Mammary epithelial cell (primary cell): ENCODE measurements at regions of chr6 and their contacts with region 1.

Region 1: GRCh38 chr6:16128759-16129622 is at the start of gene MYLIP:
- DNase-seq: peak; percentile 87
- H3K4me3 ChIP-seq: peak within 1 kb of the TSS; percentile 56 to 81 (median 71)
- H3K27ac ChIP-seq: no peak within 1 kb of the TSS
- H3K4me1 ChIP-seq: peaks cover 17% of the 10 kb centered on the region
- H3K27me3 ChIP-seq: no peaks in the 10 kb centered on the region
- CTCF ChIP-seq: peak; percentile 19 to 59
- total RNA-seq, gene MYLIP: 3.7 to 5.0 TPM

Region 2: GRCh38 chr6:15752820-15753219 is 376.2 kb before region 1 on chr6:
- CTCF ChIA-PET with region 1: no interaction called
- dilution Hi-C with region 1: no loop called
- in situ Hi-C with region 1: no loop called
- intact Hi-C with region 1: loop called (anchors 2 kb)
- DNase-seq: no peak
- H3K4me3 ChIP-seq: no peak overlapping the region
- H3K27ac ChIP-seq: no peak overlapping the region
- H3K4me1 ChIP-seq: no peaks in the 10 kb centered on the region
- H3K27me3 ChIP-seq: no peaks in the 10 kb centered on the region
- CTCF ChIP-seq: peak in 1 of 2 donors; percentile 12

Region 3: GRCh38 chr6:15881150-15881549 is 247.8 kb before region 1 on chr6:
- CTCF ChIA-PET with region 1: no interaction called
- dilution Hi-C with region 1: no loop called
- in situ Hi-C with region 1: no loop called
- intact Hi-C with region 1: no loop called
- DNase-seq: no peak
- H3K4me3 ChIP-seq: no peak overlapping the region
- H3K27ac ChIP-seq: no peak overlapping the region
- H3K4me1 ChIP-seq: peaks cover 9% of the 10 kb centered on the region
- H3K27me3 ChIP-seq: no peaks in the 10 kb centered on the region
- CTCF ChIP-seq: no peak

Region 4: GRCh38 chr6:15893556-15894268 is 235.3 kb before region 1 on chr6:
- CTCF ChIA-PET with region 1: interaction called, 5 read pairs
- dilution Hi-C with region 1: no loop called
- in situ Hi-C with region 1: no loop called
- intact Hi-C with region 1: loop called (anchors 5 kb)
- DNase-seq: peak; percentile 35
- H3K4me3 ChIP-seq: no peak overlapping the region
- H3K27ac ChIP-seq: no peak overlapping the region
- H3K4me1 ChIP-seq: no peaks in the 10 kb centered on the region
- H3K27me3 ChIP-seq: no peaks in the 10 kb centered on the region
- CTCF ChIP-seq: peak; percentile 41 to 63

Region 5: GRCh38 chr6:16168858-16169257 is 39.9 kb after region 1 on chr6:
- CTCF ChIA-PET with region 1: no interaction called
- dilution Hi-C with region 1: no loop called
- in situ Hi-C with region 1: no loop called
- intact Hi-C with region 1: loop called (anchors 2 kb)
- DNase-seq: no peak
- H3K4me3 ChIP-seq: no peak overlapping the region
- H3K27ac ChIP-seq: no peak overlapping the region
- H3K4me1 ChIP-seq: no peaks in the 10 kb centered on the region
- H3K27me3 ChIP-seq: peaks cover 10% of the 10 kb centered on the region
- CTCF ChIP-seq: peak; percentile 19 to 48

Region 6: DNA sequence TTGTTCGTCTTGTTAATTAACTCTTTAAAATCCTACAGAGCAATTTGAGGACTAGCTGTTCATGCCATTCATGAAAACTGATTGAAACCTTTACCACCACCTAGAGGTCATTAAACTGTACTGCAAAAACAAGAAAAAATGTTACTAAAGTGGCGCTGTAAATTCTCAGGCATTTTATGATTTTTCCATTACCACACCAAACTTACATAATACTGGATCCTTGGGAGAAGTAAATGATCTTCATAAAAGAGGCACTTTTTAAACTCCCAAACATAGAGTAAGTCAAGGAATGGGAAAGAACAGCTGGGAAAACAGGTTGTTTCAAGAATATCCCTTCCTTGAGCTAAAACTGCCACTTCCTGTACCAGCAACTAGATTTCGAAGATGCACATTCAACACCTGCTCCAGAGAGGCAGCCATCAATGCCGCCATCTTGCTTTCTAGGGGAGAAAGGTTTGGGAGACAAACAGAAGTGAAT is 54.2 kb after region 1 on chr6:
- CTCF ChIA-PET with region 1: interaction called, 3 read pairs
- dilution Hi-C with region 1: no loop called
- in situ Hi-C with region 1: no loop called
- intact Hi-C with region 1: loop called (anchors 2 kb)
- DNase-seq: peak; percentile 19
- H3K4me3 ChIP-seq: no peak overlapping the region
- H3K27ac ChIP-seq: no peak overlapping the region
- H3K4me1 ChIP-seq: peaks cover 6% of the 10 kb centered on the region
- H3K27me3 ChIP-seq: no peaks in the 10 kb centered on the region
- CTCF ChIP-seq: peak; percentile 61 to 63